ENCODE measurements at regions of chr19 and their contacts with region 1.

Region 1: GRCh38 chr19:56252699-56253422 is 19.7 kb upstream of the EDDM13 start:
- DNase-seq: peak; percentile 48 to 90 (median 70)
- ATAC-seq: peak in 3 of 4 donors; percentile 74 to 84 (median 82)
- H3K4me3 ChIP-seq: no peak overlapping the region
- H3K27ac ChIP-seq: no peak overlapping the region
- H3K4me1 ChIP-seq: no peaks in the 10 kb centered on the region
- H3K27me3 ChIP-seq: no peaks in the 10 kb centered on the region
- CTCF ChIP-seq: peak; percentile 68 to 89 (median 80)
- POLR2A ChIP-seq: no peak

Region 2: GRCh38 chr19:56333505-56333904 is 80.6 kb after region 1 on chr19:
- intact Hi-C with region 1: loop called (anchors 5 kb)
- DNase-seq: peak in 1 of 5 donors; percentile 24
- ATAC-seq: peak in 2 of 4 donors; percentile 60 to 69
- H3K4me3 ChIP-seq: no peak overlapping the region
- H3K27ac ChIP-seq: no peak overlapping the region
- H3K4me1 ChIP-seq: no peaks in the 10 kb centered on the region
- H3K27me3 ChIP-seq: no peaks in the 10 kb centered on the region
- CTCF ChIP-seq: peak; percentile 36 to 70 (median 60)
- POLR2A ChIP-seq: no peak

Region 3: GRCh38 chr19:56350416-56351045 is 97.7 kb after region 1 on chr19:
- intact Hi-C with region 1: loop called (anchors 5 kb)
- DNase-seq: peak in 3 of 5 donors; percentile 22 to 33 (median 26)
- ATAC-seq: peak in 2 of 4 donors; percentile 47 to 50
- H3K4me3 ChIP-seq: no peak overlapping the region
- H3K27ac ChIP-seq: no peak overlapping the region
- H3K4me1 ChIP-seq: no peaks in the 10 kb centered on the region
- H3K27me3 ChIP-seq: no peaks in the 10 kb centered on the region
- CTCF ChIP-seq: peak; percentile 76 to 95 (median 88)
- POLR2A ChIP-seq: no peak

Measured in heart left ventricle (tissue), 16 donors.